PC-9 (cell line): ENCODE measurements at regions of chr5 and their contacts with region 1.

Region 1: GRCh38 chr5:34686762-34687268 is 30.7 kb downstream of the RAI14 start:
- DNase-seq: peak; percentile 88 to 90
- H3K4me3 ChIP-seq: no peak overlapping the region
- H3K27ac ChIP-seq: peak overlapping the region; percentile 34
- H3K4me1 ChIP-seq: peaks cover 58% of the 10 kb centered on the region
- H3K27me3 ChIP-seq: no peaks in the 10 kb centered on the region
- CTCF ChIP-seq: no peak

Region 2: DNA sequence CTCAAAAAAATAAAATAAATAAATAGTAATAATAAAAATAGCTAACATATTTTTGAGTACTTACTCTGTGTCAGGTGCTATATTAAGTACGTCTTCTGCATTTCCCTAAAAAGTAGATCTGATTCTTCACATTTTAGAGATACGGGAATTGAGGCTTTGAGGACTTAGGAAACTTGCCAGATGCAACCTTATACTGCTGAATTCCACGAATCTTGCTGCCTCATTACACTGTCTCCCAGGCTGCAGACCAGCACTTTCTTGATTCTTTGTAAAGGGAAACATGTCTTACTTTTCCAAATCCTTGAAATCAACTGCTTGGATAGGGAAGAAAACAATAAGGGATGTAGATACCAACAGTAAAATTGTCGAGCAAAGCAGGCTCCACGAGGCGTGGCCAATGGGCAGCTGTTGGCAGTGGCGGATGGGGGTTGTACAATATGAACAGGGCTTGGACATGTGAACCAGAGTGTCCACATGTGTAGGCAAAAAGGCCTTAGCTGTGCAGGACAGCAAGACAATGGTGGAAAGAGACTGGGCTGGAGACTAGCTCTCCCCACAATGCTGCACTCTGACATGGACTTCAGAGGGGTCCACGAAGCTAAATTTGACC is 155.0 kb before region 1 on chr5:
- CTCF ChIA-PET with region 1: no interaction called
- POLR2A ChIA-PET with region 1: interaction called, 12 read pairs
- intact Hi-C with region 1: no loop called
- DNase-seq: no peak
- H3K4me3 ChIP-seq: no peak overlapping the region
- H3K27ac ChIP-seq: no peak overlapping the region
- H3K4me1 ChIP-seq: peaks cover 52% of the 10 kb centered on the region
- H3K27me3 ChIP-seq: no peaks in the 10 kb centered on the region
- CTCF ChIP-seq: no peak

Region 3: GRCh38 chr5:34598177-34598794 is 88.5 kb before region 1 on chr5:
- CTCF ChIA-PET with region 1: no interaction called
- POLR2A ChIA-PET with region 1: interaction called, 3 read pairs
- intact Hi-C with region 1: loop called (anchors 1 kb)
- DNase-seq: peak; percentile 69 to 98
- H3K4me3 ChIP-seq: peak overlapping the region; percentile 6; the same call in 1 of the 2 replicates
- H3K27ac ChIP-seq: peak overlapping the region; percentile 88
- H3K4me1 ChIP-seq: peaks cover 43% of the 10 kb centered on the region
- H3K27me3 ChIP-seq: no peaks in the 10 kb centered on the region
- CTCF ChIP-seq: no peak

Region 4: GRCh38 chr5:34674187-34674586 is 12.6 kb before region 1 on chr5:
- CTCF ChIA-PET with region 1: no interaction called
- POLR2A ChIA-PET with region 1: interaction called, 13 read pairs
- intact Hi-C with region 1: loop called (anchors 1 kb)
- DNase-seq: peak; percentile 47 to 88
- H3K4me3 ChIP-seq: no peak overlapping the region
- H3K27ac ChIP-seq: peak overlapping the region; percentile 66
- H3K4me1 ChIP-seq: peaks cover 44% of the 10 kb centered on the region
- H3K27me3 ChIP-seq: no peaks in the 10 kb centered on the region
- CTCF ChIP-seq: no peak

Region 5: GRCh38 chr5:34709861-34710673 is 23.3 kb after region 1 on chr5:
- CTCF ChIA-PET with region 1: interaction called, 5 read pairs
- POLR2A ChIA-PET with region 1: interaction called, 7 read pairs
- intact Hi-C with region 1: loop called (anchors 1 kb)
- DNase-seq: peak; percentile 49 to 62
- H3K4me3 ChIP-seq: no peak overlapping the region
- H3K27ac ChIP-seq: peak overlapping the region; percentile 30
- H3K4me1 ChIP-seq: peaks cover 12% of the 10 kb centered on the region
- H3K27me3 ChIP-seq: no peaks in the 10 kb centered on the region
- CTCF ChIP-seq: no peak

Region 6: GRCh38 chr5:34735491-34736363 is 48.9 kb after region 1 on chr5:
- CTCF ChIA-PET with region 1: no interaction called
- POLR2A ChIA-PET with region 1: interaction called, 8 read pairs
- intact Hi-C with region 1: loop called (anchors 1 kb)
- DNase-seq: peak; percentile 50 to 67
- H3K4me3 ChIP-seq: no peak overlapping the region
- H3K27ac ChIP-seq: peak overlapping the region; percentile 20
- H3K4me1 ChIP-seq: peaks cover 14% of the 10 kb centered on the region
- H3K27me3 ChIP-seq: no peaks in the 10 kb centered on the region
- CTCF ChIP-seq: no peak

Region 7: DNA sequence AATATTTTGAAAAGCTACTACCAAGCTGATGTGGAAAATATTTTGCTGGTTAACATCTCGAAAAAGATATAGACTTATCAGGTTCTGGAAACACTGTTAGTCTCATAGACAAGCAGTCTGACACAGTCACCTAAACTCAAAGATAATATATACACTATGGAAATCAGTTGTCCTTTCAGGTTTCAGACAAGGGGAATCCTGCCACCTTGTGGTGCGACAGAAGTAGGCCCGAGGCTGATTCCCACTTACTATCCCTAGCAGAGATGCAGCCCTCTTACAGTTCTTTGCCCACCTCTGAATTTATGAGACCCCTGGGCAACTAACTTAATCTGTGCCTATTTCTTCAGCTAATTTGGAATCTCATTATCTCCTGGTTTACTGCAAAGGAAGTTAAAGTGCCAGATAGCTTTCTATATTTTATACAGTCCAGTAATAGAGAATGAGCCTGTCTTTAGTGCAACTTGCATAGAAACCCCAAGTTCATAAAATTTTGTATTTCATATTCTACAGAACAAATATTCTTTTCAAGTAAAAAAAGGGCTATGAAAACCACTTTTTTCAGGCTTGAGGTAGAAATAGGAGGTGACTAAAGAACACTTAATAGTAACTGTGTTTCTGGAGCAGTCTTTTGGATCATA is 211.6 kb after region 1 on chr5:
- CTCF ChIA-PET with region 1: no interaction called
- POLR2A ChIA-PET with region 1: no interaction called
- intact Hi-C with region 1: loop called (anchors 1 kb)
- DNase-seq: peak; percentile 71 to 84
- H3K4me3 ChIP-seq: no peak overlapping the region
- H3K27ac ChIP-seq: no peak overlapping the region
- H3K4me1 ChIP-seq: peaks cover 17% of the 10 kb centered on the region
- H3K27me3 ChIP-seq: no peaks in the 10 kb centered on the region
- CTCF ChIP-seq: peak; percentile 98